Activated CD8-positive, alpha-beta T cell treated with anti-CD3 and anti-CD28 coated beads, Interleukin-2, amount 10 ng/mL, durations not matched to agents 7 days and 5 days (primary cell): ENCODE measurements at regions of chr15 and their contacts with region 1.

Region 1: GRCh38 chr15:73927476-73928240 is 1.4 kb downstream of the LOXL1 start:
- DNase-seq: peak; percentile 85
- ATAC-seq: peak; percentile 91
- H3K4me3 Mint-ChIP-seq: peak overlapping the region; percentile 66
- H3K27ac Mint-ChIP-seq: peak overlapping the region; percentile 71
- H3K4me1 Mint-ChIP-seq: peaks cover 71% of the 10 kb centered on the region
- H3K27me3 Mint-ChIP-seq: no peaks in the 10 kb centered on the region

Region 2: GRCh38 chr15:73357999-73358665 is 569.5 kb before region 1 on chr15:
- CTCF ChIA-PET with region 1: no interaction called
- POLR2A ChIA-PET with region 1: no interaction called
- DNase-seq: no peak
- ATAC-seq: no peak
- H3K4me3 Mint-ChIP-seq: no peak overlapping the region
- H3K27ac Mint-ChIP-seq: no peak overlapping the region
- H3K4me1 Mint-ChIP-seq: no peaks in the 10 kb centered on the region
- H3K27me3 Mint-ChIP-seq: no peaks in the 10 kb centered on the region

Region 3: DNA sequence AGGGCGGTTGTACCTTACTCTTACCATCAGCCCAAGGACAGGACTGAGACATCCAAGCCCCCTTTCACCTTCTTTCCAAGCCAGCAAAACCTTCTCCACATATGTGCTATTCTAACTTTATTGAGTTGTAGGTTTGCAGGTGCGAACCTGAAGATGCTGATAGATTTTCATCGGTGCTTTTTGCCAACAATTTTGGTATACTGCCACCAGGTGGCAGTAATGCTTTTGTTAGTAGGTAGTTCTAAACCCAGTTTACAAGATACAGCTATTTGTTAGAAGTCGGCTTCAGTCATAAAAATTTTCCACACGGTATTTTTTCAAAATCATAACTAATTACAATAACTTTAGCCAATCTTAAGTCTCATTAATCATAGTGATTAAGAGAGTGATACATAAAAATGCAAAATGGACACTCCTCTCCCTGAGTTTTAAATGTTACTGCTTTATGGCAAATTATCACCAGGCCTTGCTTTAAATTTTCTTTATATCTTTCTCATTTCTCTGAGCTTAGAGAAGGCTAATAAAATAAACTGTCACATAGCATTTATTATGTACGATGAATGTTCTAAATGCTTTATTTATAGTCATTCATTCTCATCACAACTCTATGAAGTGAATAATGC is 53.7 kb before region 1 on chr15:
- CTCF ChIA-PET with region 1: interaction called, 49 read pairs
- POLR2A ChIA-PET with region 1: no interaction called
- DNase-seq: peak; percentile 66
- ATAC-seq: no peak
- H3K4me3 Mint-ChIP-seq: no peak overlapping the region
- H3K27ac Mint-ChIP-seq: no peak overlapping the region
- H3K4me1 Mint-ChIP-seq: peaks cover 2% of the 10 kb centered on the region
- H3K27me3 Mint-ChIP-seq: peaks cover 28% of the 10 kb centered on the region

Region 4: GRCh38 chr15:73914145-73914544 is 13.5 kb before region 1 on chr15:
- CTCF ChIA-PET with region 1: interaction called, 54 read pairs
- POLR2A ChIA-PET with region 1: interaction called, 3 read pairs
- DNase-seq: peak; percentile 53
- ATAC-seq: peak; percentile 79
- H3K4me3 Mint-ChIP-seq: peak overlapping the region; percentile 52
- H3K27ac Mint-ChIP-seq: peak overlapping the region; percentile 88
- H3K4me1 Mint-ChIP-seq: peaks cover 34% of the 10 kb centered on the region
- H3K27me3 Mint-ChIP-seq: no peaks in the 10 kb centered on the region

Region 5: GRCh38 chr15:73950831-73951561 is 23.3 kb after region 1 on chr15:
- CTCF ChIA-PET with region 1: interaction called, 13 read pairs
- POLR2A ChIA-PET with region 1: no interaction called
- DNase-seq: peak; percentile 88
- ATAC-seq: peak; percentile 94
- H3K4me3 Mint-ChIP-seq: peak overlapping the region; percentile 48
- H3K27ac Mint-ChIP-seq: peak overlapping the region; percentile 89
- H3K4me1 Mint-ChIP-seq: peaks cover 22% of the 10 kb centered on the region
- H3K27me3 Mint-ChIP-seq: no peaks in the 10 kb centered on the region

Region 6: DNA sequence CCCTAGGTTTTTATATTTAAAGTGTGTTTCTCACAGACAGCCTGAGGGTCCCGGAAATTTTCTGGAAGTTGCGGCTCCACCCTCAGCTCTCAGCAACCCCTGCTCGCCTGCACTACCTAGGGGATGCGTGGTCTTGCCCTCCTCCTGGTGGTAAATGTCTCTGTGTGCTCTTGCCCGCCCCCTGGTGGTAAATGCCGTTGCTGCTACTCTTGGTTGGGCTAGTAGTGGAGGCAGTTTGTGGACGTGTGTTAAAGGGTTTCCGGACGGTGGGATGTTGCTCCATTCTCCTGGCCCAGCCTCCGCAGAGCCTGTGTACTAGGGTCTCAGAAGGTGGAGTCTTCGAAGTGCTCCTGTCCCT is 37.1 kb after region 1 on chr15:
- CTCF ChIA-PET with region 1: interaction called, 20 read pairs
- POLR2A ChIA-PET with region 1: no interaction called
- DNase-seq: peak; percentile 92
- ATAC-seq: peak; percentile 87
- H3K4me3 Mint-ChIP-seq: peak overlapping the region; percentile 35
- H3K27ac Mint-ChIP-seq: peak overlapping the region; percentile 73
- H3K4me1 Mint-ChIP-seq: peaks cover 42% of the 10 kb centered on the region
- H3K27me3 Mint-ChIP-seq: no peaks in the 10 kb centered on the region